Heart left ventricle (tissue), 16 donors: ENCODE measurements at regions of chr13 and their contacts with region 1.

Region 1: DNA sequence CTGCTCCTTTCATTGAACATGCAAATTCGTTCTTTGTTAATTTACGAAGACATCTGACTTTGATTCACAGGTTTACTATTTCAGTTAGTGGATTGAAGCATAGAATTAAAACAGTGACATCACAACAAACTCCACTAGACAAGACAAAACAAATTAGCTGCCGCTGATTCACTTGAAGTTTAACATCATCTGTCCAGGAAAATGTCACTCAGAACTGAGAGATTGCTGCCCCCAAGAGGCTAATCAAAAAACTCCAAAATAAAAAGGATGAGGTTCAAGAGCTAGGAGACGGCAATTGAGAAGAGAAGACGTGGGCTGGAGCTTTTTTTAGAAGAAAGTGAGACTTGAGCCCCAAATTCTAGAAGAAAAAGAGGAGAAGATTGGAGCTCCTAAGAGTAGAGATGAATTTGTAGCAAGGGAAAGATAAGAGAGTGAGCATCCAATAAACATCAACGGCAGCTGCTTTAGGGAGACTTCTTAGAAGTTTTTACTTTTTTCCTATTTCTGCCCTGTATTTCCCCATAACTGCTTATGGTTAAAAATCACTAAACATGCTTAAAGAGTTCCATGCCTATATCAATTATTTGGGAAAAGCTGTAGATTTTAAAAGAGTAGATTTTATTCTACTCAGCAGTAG is 40.8 kb upstream of the TPP2 start:
- DNase-seq: no peak
- ATAC-seq: peak in 1 of 4 donors; percentile 41
- H3K4me3 ChIP-seq: no peak overlapping the region
- H3K27ac ChIP-seq: no peak overlapping the region
- H3K4me1 ChIP-seq: no peaks in the 10 kb centered on the region
- H3K27me3 ChIP-seq: no peaks in the 10 kb centered on the region
- CTCF ChIP-seq: peak in 11 of 12 donors; percentile 33 to 61 (median 48)
- POLR2A ChIP-seq: no peak

Region 2: GRCh38 chr13:101144808-101145419 is 1411.1 kb before region 1 on chr13:
- intact Hi-C with region 1: loop called in 2 of 10 experiments (anchors 10 kb)
- DNase-seq: no peak
- ATAC-seq: peak in 1 of 4 donors; percentile 31
- H3K4me3 ChIP-seq: no peak overlapping the region
- H3K27ac ChIP-seq: no peak overlapping the region
- H3K4me1 ChIP-seq: peaks cover 0 to 6% (median 0%) of the 10 kb centered on the region in 12 donors
- H3K27me3 ChIP-seq: peaks cover 0 to 15% (median 0%) of the 10 kb centered on the region in 9 donors
- CTCF ChIP-seq: peak; percentile 52 to 81 (median 71)
- POLR2A ChIP-seq: no peak

Region 3: GRCh38 chr13:101930331-101930730 is 625.7 kb before region 1 on chr13:
- intact Hi-C with region 1: loop called in 1 of 10 experiments (anchors 10 kb)
- DNase-seq: no peak
- ATAC-seq: no peak
- H3K4me3 ChIP-seq: no peak overlapping the region
- H3K27ac ChIP-seq: no peak overlapping the region
- H3K4me1 ChIP-seq: no peaks in the 10 kb centered on the region
- H3K27me3 ChIP-seq: no peaks in the 10 kb centered on the region
- CTCF ChIP-seq: no peak
- POLR2A ChIP-seq: no peak

Region 4: DNA sequence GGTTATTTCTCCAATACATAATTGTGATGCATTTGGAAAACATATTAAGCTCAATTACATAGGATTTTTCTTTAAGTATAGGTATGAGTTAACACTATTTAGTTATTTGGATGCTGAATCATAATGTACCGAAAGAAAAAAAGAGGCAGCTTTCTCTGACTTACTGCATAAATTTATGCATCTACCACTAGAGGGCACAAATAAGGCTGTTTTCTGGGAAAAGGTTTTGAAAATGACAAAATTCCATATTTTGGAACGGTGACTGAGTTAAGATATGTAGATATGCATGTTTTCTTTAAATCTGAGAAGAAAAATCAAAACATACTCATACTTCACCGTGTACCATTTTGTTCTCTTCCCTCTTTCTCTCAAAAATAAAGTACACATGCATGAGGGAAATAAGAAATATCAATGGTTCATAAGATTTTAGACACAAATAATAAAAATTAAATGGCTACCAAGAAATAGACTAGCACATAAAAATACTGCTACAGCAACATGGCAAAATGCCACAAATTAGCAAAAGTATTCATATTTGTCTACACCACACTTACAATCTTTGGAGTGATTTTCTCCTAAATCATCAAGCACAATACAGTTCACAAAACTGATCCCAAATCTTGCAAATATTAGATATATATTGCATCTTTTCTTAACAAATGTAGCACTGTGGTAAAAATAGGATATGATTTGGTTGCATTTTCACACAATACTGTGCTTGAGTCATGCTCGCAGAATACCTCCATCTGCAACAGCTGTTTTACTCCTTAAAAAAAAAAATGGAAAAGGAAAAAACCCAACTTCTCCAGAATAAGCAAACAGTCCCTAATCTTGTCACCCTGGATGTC is 414.2 kb before region 1 on chr13:
- intact Hi-C with region 1: loop called in 1 of 10 experiments (anchors 10 kb)
- DNase-seq: no peak
- ATAC-seq: peak in 1 of 4 donors; percentile 57
- H3K4me3 ChIP-seq: peak overlapping the region in 1 of 12 donors; percentile 2
- H3K27ac ChIP-seq: peak overlapping the region in 1 of 12 donors; percentile 24
- H3K4me1 ChIP-seq: peaks cover 0 to 17% (median 0%) of the 10 kb centered on the region in 12 donors
- H3K27me3 ChIP-seq: no peaks in the 10 kb centered on the region
- CTCF ChIP-seq: peak; percentile 49 to 80 (median 64)
- POLR2A ChIP-seq: no peak

Region 5: GRCh38 chr13:102460801-102461200 is 95.2 kb before region 1 on chr13:
- intact Hi-C with region 1: loop called in 1 of 10 experiments (anchors 5 kb)
- DNase-seq: no peak
- ATAC-seq: no peak
- H3K4me3 ChIP-seq: no peak overlapping the region
- H3K27ac ChIP-seq: no peak overlapping the region
- H3K4me1 ChIP-seq: no peaks in the 10 kb centered on the region
- H3K27me3 ChIP-seq: no peaks in the 10 kb centered on the region
- CTCF ChIP-seq: no peak
- POLR2A ChIP-seq: no peak